PC-9 (cell line): ENCODE measurements at regions of chr19 and their contacts with region 1.

Region 1: GRCh38 chr19:41753936-41754529 is 1.3 kb upstream of the CEACAM6 start:
- DNase-seq: peak in 1 of 2 experiments; percentile 51
- H3K4me3 ChIP-seq: peak overlapping the region; percentile 89; the same call in 1 of the 2 replicates
- H3K27ac ChIP-seq: peak overlapping the region; percentile 85
- H3K4me1 ChIP-seq: peaks cover 35% of the 10 kb centered on the region
- H3K27me3 ChIP-seq: no peaks in the 10 kb centered on the region
- CTCF ChIP-seq: peak; percentile 91

Region 2: DNA sequence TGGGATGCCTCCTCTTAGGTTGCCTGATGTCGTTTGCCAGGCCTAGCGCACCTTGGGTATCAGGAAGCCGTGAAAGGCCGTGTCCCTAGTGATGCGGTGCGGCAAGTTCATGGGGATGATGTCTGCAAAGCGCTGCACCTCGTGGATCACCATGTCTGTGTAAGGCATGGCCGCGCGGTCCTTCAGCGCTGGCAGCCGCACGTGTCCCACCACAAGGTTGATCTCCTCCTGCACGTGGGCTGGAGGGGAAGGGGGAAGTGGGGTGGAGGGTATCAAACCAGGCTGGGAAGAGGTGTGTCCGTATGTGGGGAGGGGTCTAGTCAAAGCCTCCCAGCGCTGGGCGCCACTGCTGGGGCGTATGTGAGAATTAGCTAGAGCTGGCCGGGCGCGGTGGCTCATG is 931.9 kb before region 1 on chr19:
- CTCF ChIA-PET with region 1: no interaction called
- POLR2A ChIA-PET with region 1: no interaction called
- intact Hi-C with region 1: no loop called
- DNase-seq: no peak
- H3K4me3 ChIP-seq: no peak overlapping the region
- H3K27ac ChIP-seq: no peak overlapping the region
- H3K4me1 ChIP-seq: 0 out of 2 replicates have a peak, but pooled peaks cover 5% of the 10 kb centered on the region
- H3K27me3 ChIP-seq: no peaks in the 10 kb centered on the region
- CTCF ChIP-seq: no peak

Region 3: DNA sequence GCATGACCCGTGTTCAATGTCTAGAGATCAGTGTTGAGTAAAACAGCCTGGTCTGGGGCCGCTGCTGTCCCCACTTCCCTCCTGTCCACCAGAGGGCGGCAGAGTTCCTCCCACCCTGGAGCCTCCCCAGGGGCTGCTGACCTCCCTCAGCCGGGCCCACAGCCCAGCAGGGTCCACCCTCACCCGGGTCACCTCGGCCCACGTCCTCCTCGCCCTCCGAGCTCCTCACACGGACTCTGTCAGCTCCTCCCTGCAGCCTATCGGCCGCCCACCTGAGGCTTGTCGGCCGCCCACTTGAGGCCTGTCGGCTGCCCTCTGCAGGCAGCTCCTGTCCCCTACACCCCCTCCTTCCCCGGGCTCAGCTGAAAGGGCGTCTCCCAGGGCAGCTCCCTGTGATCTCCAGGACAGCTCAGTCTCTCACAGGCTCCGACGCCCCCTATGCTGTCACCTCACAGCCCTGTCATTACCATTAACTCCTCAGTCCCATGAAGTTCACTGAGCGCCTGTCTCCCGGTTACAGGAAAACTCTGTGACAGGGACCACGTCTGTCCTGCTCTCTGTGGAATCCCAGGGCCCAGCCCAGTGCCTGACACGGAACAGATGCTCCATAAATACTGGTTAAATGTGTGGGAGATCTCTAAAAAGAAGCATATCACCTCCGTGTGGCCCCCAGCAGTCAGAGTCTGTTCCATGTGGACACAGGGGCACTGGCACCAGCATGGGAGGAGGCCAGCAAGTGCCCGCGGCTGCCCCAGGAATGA is 47.1 kb before region 1 on chr19:
- CTCF ChIA-PET with region 1: interaction called, 24 read pairs
- POLR2A ChIA-PET with region 1: no interaction called
- intact Hi-C with region 1: no loop called
- DNase-seq: peak; percentile 69 to 81
- H3K4me3 ChIP-seq: peak overlapping the region; percentile 60; the same call in 1 of the 2 replicates
- H3K27ac ChIP-seq: no peak overlapping the region
- H3K4me1 ChIP-seq: peaks cover 18% of the 10 kb centered on the region
- H3K27me3 ChIP-seq: no peaks in the 10 kb centered on the region
- CTCF ChIP-seq: peak; percentile 99

Region 4: DNA sequence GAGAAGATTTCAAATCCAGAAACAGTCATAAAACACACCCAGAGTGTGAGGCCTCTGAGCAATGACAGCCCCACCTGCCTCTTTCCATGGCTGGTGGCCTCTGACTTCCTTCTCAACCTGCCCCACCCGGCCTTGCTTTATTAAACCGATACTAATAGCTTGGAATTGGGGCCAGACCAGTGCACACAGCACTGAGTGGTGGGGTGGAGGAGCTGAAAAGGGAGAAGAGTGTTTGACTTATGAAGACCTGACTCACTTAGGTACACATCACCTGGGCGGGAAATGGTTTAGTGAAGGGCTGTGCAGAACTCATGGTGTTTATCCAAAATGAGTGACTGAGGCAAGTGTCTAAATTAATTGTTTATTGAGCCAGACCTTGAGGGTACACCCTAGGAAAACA is 19.4 kb before region 1 on chr19:
- CTCF ChIA-PET with region 1: interaction called, 10 read pairs
- POLR2A ChIA-PET with region 1: interaction called, 10 read pairs
- intact Hi-C with region 1: no loop called
- DNase-seq: peak; percentile 55 to 98
- H3K4me3 ChIP-seq: peak overlapping the region; percentile 17; the same call in 1 of the 2 replicates
- H3K27ac ChIP-seq: peak overlapping the region; percentile 100
- H3K4me1 ChIP-seq: peaks cover 92% of the 10 kb centered on the region
- H3K27me3 ChIP-seq: no peaks in the 10 kb centered on the region
- CTCF ChIP-seq: no peak

Region 5: GRCh38 chr19:41775360-41775695 is 21.3 kb after region 1 on chr19:
- CTCF ChIA-PET with region 1: interaction called, 23 read pairs
- POLR2A ChIA-PET with region 1: interaction called, 23 read pairs
- intact Hi-C with region 1: loop called (anchors 1 kb)
- DNase-seq: peak; percentile 50 to 99
- H3K4me3 ChIP-seq: peak overlapping the region; percentile 34; the same call in 1 of the 2 replicates
- H3K27ac ChIP-seq: peak overlapping the region; percentile 100
- H3K4me1 ChIP-seq: peaks cover 91% of the 10 kb centered on the region
- H3K27me3 ChIP-seq: no peaks in the 10 kb centered on the region
- CTCF ChIP-seq: no peak

Region 6: GRCh38 chr19:41785653-41786052 is 31.6 kb after region 1 on chr19:
- CTCF ChIA-PET with region 1: interaction called, 50 read pairs
- POLR2A ChIA-PET with region 1: interaction called, 8 read pairs
- intact Hi-C with region 1: loop called (anchors 1 kb)
- DNase-seq: peak; percentile 77 to 79
- H3K4me3 ChIP-seq: no peak overlapping the region
- H3K27ac ChIP-seq: peak overlapping the region; percentile 51
- H3K4me1 ChIP-seq: peaks cover 56% of the 10 kb centered on the region
- H3K27me3 ChIP-seq: no peaks in the 10 kb centered on the region
- CTCF ChIP-seq: peak; percentile 92

Region 7: DNA sequence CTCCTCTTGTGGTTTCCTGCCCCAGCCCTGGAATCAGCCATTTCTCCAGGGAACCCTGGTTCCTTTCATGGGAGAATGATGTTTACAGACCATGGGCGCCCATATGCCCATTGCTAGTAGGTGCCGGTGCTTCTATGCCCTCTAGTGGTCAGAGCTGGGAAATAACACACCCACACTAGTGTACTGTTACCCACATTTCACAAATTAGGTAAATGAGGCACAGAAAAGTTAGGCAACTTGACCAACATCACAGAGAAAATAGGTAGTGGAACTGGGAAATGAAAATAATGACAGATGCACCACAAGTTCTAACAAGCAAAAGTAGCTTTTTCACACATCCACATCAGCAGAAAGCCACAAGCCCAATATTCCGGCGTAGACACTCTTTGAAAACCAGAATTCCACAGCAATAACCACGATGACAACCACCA is 41.0 kb after region 1 on chr19:
- CTCF ChIA-PET with region 1: interaction called, 12 read pairs
- POLR2A ChIA-PET with region 1: no interaction called
- intact Hi-C with region 1: no loop called
- DNase-seq: peak in 1 of 2 experiments; percentile 57
- H3K4me3 ChIP-seq: no peak overlapping the region
- H3K27ac ChIP-seq: no peak overlapping the region
- H3K4me1 ChIP-seq: peaks cover 60% of the 10 kb centered on the region
- H3K27me3 ChIP-seq: no peaks in the 10 kb centered on the region
- CTCF ChIP-seq: peak; percentile 93

Region 8: GRCh38 chr19:41993612-41994483 is 239.8 kb after region 1 on chr19 and contains the start of gene ATP1A3:
- CTCF ChIA-PET with region 1: no interaction called
- POLR2A ChIA-PET with region 1: interaction called, 15 read pairs
- intact Hi-C with region 1: no loop called
- DNase-seq: peak in 1 of 2 experiments; percentile 33
- H3K4me3 ChIP-seq: peak within 1 kb of the TSS; percentile 38; the same call in 1 of the 2 replicates
- H3K27ac ChIP-seq: no peak within 1 kb of the TSS
- H3K4me1 ChIP-seq: no peaks in the 10 kb centered on the region
- H3K27me3 ChIP-seq: peaks cover 78% of the 10 kb centered on the region
- CTCF ChIP-seq: no peak
- total RNA-seq, gene ATP1A3: not detected in 2 replicates